Calu3 (cell line): ENCODE measurements at regions of chr2 and their contacts with region 1.

Region 1: GRCh38 chr2:117330641-117331040 is 483.9 kb upstream of the DDX18 start:
- DNase-seq: peak; percentile 18
- H3K4me3 Mint-ChIP-seq: peak overlapping the region; percentile 21
- H3K27ac Mint-ChIP-seq: peak overlapping the region; percentile 60
- H3K4me1 Mint-ChIP-seq: peaks cover 42% of the 10 kb centered on the region
- H3K27me3 Mint-ChIP-seq: no peaks in the 10 kb centered on the region
- CTCF ChIP-seq: no peak

Region 2: GRCh38 chr2:117199511-117199910 is 131.1 kb before region 1 on chr2:
- CTCF ChIA-PET with region 1: no interaction called
- intact Hi-C with region 1: no loop called
- DNase-seq: no peak
- H3K4me3 Mint-ChIP-seq: no peak overlapping the region
- H3K27ac Mint-ChIP-seq: peak overlapping the region; percentile 28
- H3K4me1 Mint-ChIP-seq: peaks cover 9% of the 10 kb centered on the region
- H3K27me3 Mint-ChIP-seq: no peaks in the 10 kb centered on the region
- CTCF ChIP-seq: no peak

Region 3: DNA sequence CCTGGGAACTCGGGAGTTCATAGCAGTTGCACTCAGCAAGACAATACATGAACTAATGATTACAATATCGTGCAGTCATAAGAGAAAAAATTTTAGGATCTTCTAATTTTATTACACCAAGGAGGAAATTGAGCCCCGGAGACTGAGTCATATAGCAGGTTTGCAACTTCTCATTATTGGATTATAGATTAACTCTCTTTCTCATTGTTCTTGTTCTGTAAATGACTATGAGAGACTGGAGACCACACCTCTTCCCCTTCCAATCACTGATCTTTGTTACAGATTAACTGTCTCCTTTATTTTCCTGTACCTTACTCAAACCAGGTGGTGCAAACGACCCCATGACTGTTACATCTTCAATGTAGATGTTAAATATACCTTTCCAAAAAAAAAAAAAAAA is 48.0 kb after region 1 on chr2:
- CTCF ChIA-PET with region 1: no interaction called
- intact Hi-C with region 1: loop called (anchors 2 kb)
- DNase-seq: peak; percentile 32
- H3K4me3 Mint-ChIP-seq: peak overlapping the region; percentile 37
- H3K27ac Mint-ChIP-seq: peak overlapping the region; percentile 72
- H3K4me1 Mint-ChIP-seq: peaks cover 35% of the 10 kb centered on the region
- H3K27me3 Mint-ChIP-seq: no peaks in the 10 kb centered on the region
- CTCF ChIP-seq: no peak